ENCODE measurements at regions of chr16 and their contacts with region 1.

Region 1: GRCh38 chr16:29862884-29863668 is at the start of gene CDIPT:
- DNase-seq: peak; percentile 97
- ATAC-seq: peak; percentile 98
- total RNA-seq, gene CDIPT: 65.8 TPM

Region 2: DNA sequence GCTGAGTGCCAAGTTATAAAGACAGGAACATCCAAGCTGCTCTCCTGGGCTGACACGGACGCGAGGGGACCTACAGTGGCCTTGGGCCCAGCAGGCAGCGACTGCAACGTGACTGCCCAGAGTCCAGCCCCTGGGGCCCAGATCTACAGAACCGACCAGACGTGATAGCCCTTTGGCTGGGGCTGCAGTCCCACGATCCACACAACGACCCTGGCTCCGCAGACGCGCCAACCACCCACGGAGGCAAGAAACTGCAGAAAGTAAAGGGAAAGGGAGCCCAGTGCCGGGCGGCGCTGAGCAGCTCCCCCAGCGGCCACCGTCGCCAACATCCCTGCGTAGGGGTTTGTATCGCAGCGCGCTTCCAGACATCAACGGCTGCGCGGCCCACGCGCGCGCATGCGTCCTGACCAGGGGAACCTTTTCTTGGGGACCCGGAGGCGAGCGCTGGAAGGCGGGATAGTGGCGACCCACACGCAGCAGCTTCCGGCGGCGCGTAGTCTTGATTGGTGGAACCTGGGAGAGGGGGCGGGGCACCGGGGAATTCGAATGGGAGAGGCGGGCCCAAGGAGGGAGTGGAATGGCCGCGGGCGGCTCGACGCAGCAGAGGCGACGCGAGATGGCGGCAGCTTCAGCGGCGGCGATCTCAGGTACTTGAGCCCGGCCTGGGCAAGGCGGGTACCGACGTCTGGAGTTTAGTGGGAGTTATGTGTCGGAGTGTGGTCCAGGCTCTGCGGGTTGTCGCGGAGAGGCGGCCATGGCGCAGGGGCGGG is 72.7 kb before region 1 on chr16 and contains the start of gene KIF22:
- intact Hi-C with region 1: loop called (anchors 1 kb)
- DNase-seq: peak; percentile 100
- ATAC-seq: peak; percentile 99
- total RNA-seq, gene KIF22: 53.3 TPM

Region 3: DNA sequence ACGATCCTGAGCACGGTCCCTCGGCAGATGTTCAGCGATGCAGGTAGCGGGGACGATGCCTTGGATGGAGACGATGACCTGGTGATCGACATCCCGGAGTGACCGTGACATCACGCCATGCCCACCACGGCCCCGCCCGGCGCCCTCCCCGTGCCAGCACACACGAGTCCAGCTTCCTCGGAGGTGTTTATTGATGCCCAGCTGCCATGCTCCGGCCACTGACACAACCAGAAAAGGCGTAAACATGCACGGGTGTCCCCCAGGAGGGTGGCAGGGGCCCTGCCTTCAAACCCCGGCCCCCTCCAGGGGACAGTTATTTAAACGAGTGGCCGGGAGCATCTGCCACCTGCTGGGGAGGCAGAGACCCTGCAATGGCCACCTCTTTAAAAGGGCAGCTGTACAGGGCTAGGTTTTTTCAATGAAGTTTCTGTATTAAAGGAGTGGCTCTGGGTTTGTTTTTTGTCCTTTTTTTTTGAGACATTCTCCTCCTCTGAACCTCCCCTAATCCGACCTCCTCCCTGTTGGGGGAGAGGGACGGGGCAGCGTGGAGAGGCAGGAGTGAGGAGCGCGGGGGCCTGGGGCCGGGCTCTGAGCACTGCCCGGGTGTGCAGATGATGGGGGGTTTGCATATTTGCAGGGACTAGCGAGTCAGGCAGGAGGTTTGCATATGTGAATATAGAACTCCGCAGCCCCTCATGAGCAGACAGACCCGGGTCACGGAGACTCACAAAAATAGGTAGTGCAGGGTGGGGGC is 142.4 kb after region 1 on chr16:
- intact Hi-C with region 1: loop called (anchors 10 kb)
- DNase-seq: peak; percentile 53
- ATAC-seq: peak; percentile 35